Activated naive CD4-positive, alpha-beta T cell treated with anti-CD3 and anti-CD28 coated beads, Interleukin-2, amount 10 ng/mL, durations not matched to agents 7 days and 5 days (primary cell): ENCODE measurements at regions of chr17 and their contacts with region 1.

Region 1: GRCh38 chr17:7834962-7835813 is 1.2 kb downstream of the KDM6B start:
- DNase-seq: peak; percentile 94
- H3K4me3 Mint-ChIP-seq: peak overlapping the region; percentile 98
- H3K27ac Mint-ChIP-seq: peak overlapping the region; percentile 97
- H3K4me1 Mint-ChIP-seq: peaks cover 51% of the 10 kb centered on the region
- H3K27me3 Mint-ChIP-seq: peaks cover 41% of the 10 kb centered on the region

Region 2: DNA sequence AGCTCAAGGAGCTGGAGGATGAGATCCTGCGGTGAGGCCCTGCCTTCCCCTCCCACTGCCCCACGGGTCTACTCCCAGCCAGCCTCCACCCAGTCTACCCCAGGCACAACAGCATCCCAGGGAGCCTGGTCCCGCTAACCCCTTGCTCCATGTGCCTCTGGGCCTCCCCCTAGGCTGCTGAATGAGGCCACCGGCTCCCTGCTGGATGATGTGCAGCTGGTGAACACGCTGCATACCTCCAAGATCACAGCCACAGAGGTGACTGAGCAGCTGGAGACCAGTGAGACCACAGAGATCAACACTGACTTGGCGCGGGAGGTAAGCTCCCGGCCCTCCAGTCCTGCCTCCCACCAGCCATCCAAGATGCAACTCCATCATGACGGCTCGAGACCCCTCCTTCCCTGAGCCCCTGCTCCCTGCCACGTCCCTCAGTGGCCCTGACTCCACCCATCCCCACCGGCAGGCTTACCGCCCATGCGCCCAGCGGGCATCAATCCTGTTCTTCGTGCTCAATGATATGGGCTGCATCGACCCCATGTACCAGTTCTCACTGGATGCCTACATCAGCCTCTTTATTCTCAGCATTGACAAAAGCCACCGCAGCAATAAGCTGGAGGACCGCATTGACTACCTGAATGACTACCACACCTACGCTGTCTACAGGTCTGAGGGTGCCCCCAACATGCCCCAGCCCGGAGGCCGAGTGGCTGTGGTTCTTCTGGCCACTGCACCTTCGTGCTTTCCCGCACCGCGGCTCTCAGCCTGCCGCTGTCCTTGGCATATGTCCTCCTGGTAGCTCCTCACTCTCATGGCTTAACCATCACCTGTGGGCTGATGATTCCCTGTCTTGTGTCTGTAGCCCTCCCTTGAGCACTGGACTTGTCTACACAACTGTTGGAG is 16.2 kb before region 1 on chr17:
- CTCF ChIA-PET with region 1: interaction called, 10 read pairs
- DNase-seq: no peak
- H3K4me3 Mint-ChIP-seq: no peak overlapping the region
- H3K27ac Mint-ChIP-seq: no peak overlapping the region
- H3K4me1 Mint-ChIP-seq: no peaks in the 10 kb centered on the region
- H3K27me3 Mint-ChIP-seq: peaks cover 23% of the 10 kb centered on the region

Region 3: GRCh38 chr17:7851438-7852256 is 16.5 kb after region 1 on chr17:
- CTCF ChIA-PET with region 1: interaction called, 38 read pairs
- DNase-seq: peak; percentile 97
- H3K4me3 Mint-ChIP-seq: peak overlapping the region; percentile 78
- H3K27ac Mint-ChIP-seq: peak overlapping the region; percentile 65
- H3K4me1 Mint-ChIP-seq: peaks cover 33% of the 10 kb centered on the region
- H3K27me3 Mint-ChIP-seq: no peaks in the 10 kb centered on the region

Region 4: GRCh38 chr17:7856883-7857723 is 21.9 kb after region 1 on chr17 and contains the start of gene NAA38:
- CTCF ChIA-PET with region 1: interaction called, 38 read pairs
- DNase-seq: peak; percentile 98
- H3K4me3 Mint-ChIP-seq: no peak within 1 kb of the TSS
- H3K27ac Mint-ChIP-seq: no peak within 1 kb of the TSS
- H3K4me1 Mint-ChIP-seq: peaks cover 10% of the 10 kb centered on the region
- H3K27me3 Mint-ChIP-seq: no peaks in the 10 kb centered on the region